CD4-positive, alpha-beta T cell (primary cell): ENCODE measurements at regions of chr16 and their contacts with region 1.

Region 1: GRCh38 chr16:50368410-50369132 is at the start of gene BRD7:
- DNase-seq: peak; percentile 30 to 88 (median 70)
- ATAC-seq: peak; percentile 83
- H3K4me3 ChIP-seq: peak within 1 kb of the TSS; percentile 62
- H3K4me3 Mint-ChIP-seq: peak within 1 kb of the TSS; percentile 94
- H3K27ac ChIP-seq: peak within 1 kb of the TSS; percentile 15 to 52
- H3K27ac Mint-ChIP-seq: peak within 1 kb of the TSS; percentile 91
- H3K4me1 ChIP-seq: peaks cover 28% of the 10 kb centered on the region
- H3K4me1 Mint-ChIP-seq: peaks cover 58% of the 10 kb centered on the region
- H3K27me3 ChIP-seq: no peaks in the 10 kb centered on the region
- H3K27me3 Mint-ChIP-seq: no peaks in the 10 kb centered on the region
- CTCF ChIP-seq: no peak
- total RNA-seq, gene BRD7: 95.4 to 103 TPM

Region 2: DNA sequence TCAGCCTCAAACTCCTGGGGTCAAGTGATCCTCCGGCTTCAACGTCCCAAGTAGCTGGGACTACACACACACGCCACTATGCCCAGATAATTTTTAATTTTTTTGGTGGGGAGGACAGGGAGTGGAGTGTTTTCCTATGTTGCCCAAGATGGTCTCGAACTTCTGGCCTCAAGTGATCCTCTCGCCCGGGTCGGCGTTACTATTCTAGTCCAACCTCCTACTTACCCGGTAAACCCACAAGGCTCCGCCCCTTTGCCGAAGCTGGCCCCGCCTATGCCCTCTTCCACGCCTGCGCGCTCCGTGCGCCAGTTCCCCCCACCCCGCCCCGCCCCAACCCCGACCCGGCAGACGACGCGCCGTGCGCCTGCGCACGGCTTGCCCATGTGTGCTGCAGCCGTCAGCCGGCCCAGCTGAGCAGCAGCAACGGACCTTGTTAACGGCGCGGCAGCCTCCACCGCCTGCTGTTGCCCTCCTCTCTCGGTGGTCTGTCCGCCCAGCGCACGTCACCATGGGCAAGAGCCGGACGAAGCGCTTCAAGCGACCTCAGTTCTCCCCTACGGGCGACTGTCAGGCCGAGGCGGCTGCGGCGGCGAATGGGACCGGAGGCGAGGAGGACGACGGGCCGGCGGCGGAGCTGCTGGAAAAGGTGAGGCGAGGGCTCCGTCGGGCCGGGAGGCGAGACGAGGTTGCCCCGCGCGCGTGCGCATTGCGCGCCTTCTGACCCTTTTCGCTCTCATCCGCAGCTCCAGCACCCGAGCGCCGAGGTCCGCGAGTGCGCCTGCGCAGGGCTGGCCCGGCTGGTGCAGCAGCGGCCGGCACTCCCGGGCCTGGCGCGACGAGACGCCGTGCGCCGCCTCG is 302.7 kb before region 1 on chr16 and contains the start of gene HEATR3:
- CTCF ChIA-PET with region 1: no interaction called
- POLR2A ChIA-PET with region 1: no interaction called
- intact Hi-C with region 1: loop called in 1 of 2 experiments (anchors 10 kb)
- DNase-seq: peak; percentile 89 to 98 (median 95)
- ATAC-seq: peak; percentile 83
- H3K4me3 ChIP-seq: peak within 1 kb of the TSS; percentile 69
- H3K4me3 Mint-ChIP-seq: peak within 1 kb of the TSS; percentile 99
- H3K27ac ChIP-seq: peak within 1 kb of the TSS; percentile 69 to 85
- H3K27ac Mint-ChIP-seq: peak within 1 kb of the TSS; percentile 83
- H3K4me1 ChIP-seq: peaks cover 25% of the 10 kb centered on the region
- H3K4me1 Mint-ChIP-seq: peaks cover 53% of the 10 kb centered on the region
- H3K27me3 ChIP-seq: no peaks in the 10 kb centered on the region
- H3K27me3 Mint-ChIP-seq: no peaks in the 10 kb centered on the region
- CTCF ChIP-seq: no peak
- total RNA-seq, gene HEATR3: 10.1 to 10.6 TPM

Region 3: GRCh38 chr16:50354629-50355456 is 13.7 kb before region 1 on chr16:
- CTCF ChIA-PET with region 1: interaction called, 16 read pairs
- POLR2A ChIA-PET with region 1: interaction called, 6 read pairs
- intact Hi-C with region 1: no loop called
- DNase-seq: peak in 3 of 14 experiments; percentile 49 to 51 (median 50)
- ATAC-seq: peak; percentile 55
- H3K4me3 ChIP-seq: no peak overlapping the region
- H3K4me3 Mint-ChIP-seq: no peak overlapping the region
- H3K27ac ChIP-seq: no peak overlapping the region
- H3K27ac Mint-ChIP-seq: peak overlapping the region; percentile 80
- H3K4me1 ChIP-seq: peaks cover 3% of the 10 kb centered on the region
- H3K4me1 Mint-ChIP-seq: peaks cover 52% of the 10 kb centered on the region
- H3K27me3 ChIP-seq: no peaks in the 10 kb centered on the region
- H3K27me3 Mint-ChIP-seq: no peaks in the 10 kb centered on the region
- CTCF ChIP-seq: peak; percentile 95

Region 4: DNA sequence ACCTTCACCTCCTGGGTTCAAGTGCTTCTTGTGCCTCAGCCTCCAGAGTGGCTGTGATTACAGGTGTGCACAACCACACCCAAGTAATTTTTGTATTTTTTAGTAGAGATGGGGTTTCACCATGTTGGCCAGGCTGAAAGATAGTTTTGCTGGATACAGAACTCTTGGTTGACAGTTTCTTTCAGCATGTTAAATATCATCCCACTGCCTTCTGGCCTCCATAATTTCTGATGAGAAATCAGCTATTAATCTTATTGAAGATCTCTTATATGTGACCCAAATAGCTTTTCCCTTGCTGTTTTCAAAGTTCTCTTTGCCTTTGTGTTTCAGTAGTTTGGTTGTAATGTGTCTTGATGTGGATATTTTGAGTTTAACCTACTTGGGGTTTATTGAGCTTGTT is 50.5 kb after region 1 on chr16:
- CTCF ChIA-PET with region 1: no interaction called
- POLR2A ChIA-PET with region 1: no interaction called
- intact Hi-C with region 1: no loop called
- DNase-seq: no peak
- ATAC-seq: no peak
- H3K4me3 ChIP-seq: no peak overlapping the region
- H3K4me3 Mint-ChIP-seq: no peak overlapping the region
- H3K27ac ChIP-seq: no peak overlapping the region
- H3K27ac Mint-ChIP-seq: no peak overlapping the region
- H3K4me1 ChIP-seq: no peaks in the 10 kb centered on the region
- H3K4me1 Mint-ChIP-seq: no peaks in the 10 kb centered on the region
- H3K27me3 ChIP-seq: no peaks in the 10 kb centered on the region
- H3K27me3 Mint-ChIP-seq: peaks cover 14% of the 10 kb centered on the region
- CTCF ChIP-seq: no peak

Region 5: DNA sequence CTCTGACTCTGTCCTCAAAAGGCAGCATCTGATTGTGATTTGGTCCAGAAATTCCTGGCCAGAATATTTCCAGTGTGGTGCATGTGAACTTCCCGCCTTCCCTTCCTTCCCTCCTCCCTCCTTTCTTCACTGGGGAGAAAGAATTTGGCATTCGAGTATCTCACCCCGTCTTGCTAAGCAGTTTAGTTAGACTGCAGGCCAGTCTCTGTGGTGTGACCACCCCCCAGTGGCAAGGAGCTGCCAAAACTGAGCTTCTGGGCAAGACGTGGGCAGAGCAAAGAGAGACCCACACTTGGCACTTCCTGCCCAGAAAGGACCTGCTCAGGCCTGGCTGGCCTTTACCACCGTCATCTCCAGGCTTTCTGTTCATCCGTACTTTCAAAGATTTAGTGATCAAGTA is 276.2 kb after region 1 on chr16:
- CTCF ChIA-PET with region 1: interaction called, 4 read pairs
- POLR2A ChIA-PET with region 1: no interaction called
- intact Hi-C with region 1: loop called in 1 of 2 experiments (anchors 5 kb)
- DNase-seq: peak in 12 of 14 experiments; percentile 15 to 69 (median 46)
- ATAC-seq: peak; percentile 81
- H3K4me3 ChIP-seq: no peak overlapping the region
- H3K4me3 Mint-ChIP-seq: no peak overlapping the region
- H3K27ac ChIP-seq: no peak overlapping the region
- H3K27ac Mint-ChIP-seq: no peak overlapping the region
- H3K4me1 ChIP-seq: peaks cover 4% of the 10 kb centered on the region
- H3K4me1 Mint-ChIP-seq: peaks cover 6% of the 10 kb centered on the region
- H3K27me3 ChIP-seq: no peaks in the 10 kb centered on the region
- H3K27me3 Mint-ChIP-seq: no peaks in the 10 kb centered on the region
- CTCF ChIP-seq: peak; percentile 50